CD4-positive, alpha-beta memory T cell (primary cell): ENCODE measurements at regions of chr14 and their contacts with region 1.

Region 1: DNA sequence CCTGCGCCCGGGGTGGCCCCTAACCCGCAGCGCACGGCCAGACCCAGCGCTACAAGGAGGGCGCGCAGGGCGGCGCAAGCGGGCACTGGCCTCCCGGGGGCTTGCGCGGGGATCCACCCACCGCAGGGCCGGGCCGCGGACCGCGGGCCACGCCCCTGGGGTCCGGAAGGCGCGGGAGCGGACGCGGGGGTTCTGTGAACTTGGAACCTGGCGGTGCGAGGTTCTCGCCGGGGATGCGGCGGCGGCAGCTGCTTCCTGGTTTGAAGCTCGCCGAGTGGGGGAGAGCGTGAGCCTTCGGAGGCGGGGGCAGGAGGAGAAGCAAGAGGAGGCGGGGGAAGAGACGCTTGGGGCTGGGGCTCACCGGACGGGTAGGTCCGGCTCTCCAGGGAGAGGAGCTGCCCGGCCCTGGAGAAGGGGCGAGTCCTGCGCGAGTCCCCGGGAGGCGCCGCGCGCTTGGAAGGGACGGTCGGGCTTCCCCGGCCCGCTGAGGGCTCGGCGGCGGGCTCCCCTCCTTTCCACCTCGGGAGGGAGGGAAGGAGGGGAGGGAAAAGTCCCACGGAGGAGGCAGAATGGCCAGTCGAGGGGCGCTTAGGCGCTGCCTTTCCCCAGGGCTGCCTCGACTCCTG is at the start of gene PRKCH:
- DNase-seq: peak; percentile 84 to 91 (median 85)
- H3K4me3 ChIP-seq: peak within 1 kb of the TSS; percentile 85 to 95
- H3K4me3 Mint-ChIP-seq: peak within 1 kb of the TSS; percentile 98 to 100 (median 99)
- H3K27ac ChIP-seq: peak within 1 kb of the TSS; percentile 89
- H3K27ac Mint-ChIP-seq: peak within 1 kb of the TSS in 6 of 7 donors; percentile 94 to 99 (median 97)
- H3K4me1 ChIP-seq: peaks cover 26% of the 10 kb centered on the region
- H3K4me1 Mint-ChIP-seq: peaks cover 17 to 40% (median 22%) of the 10 kb centered on the region in 4 donors
- H3K27me3 ChIP-seq: no peaks in the 10 kb centered on the region
- H3K27me3 Mint-ChIP-seq: no peaks in the 10 kb centered on the region
- total RNA-seq, gene PRKCH: 247 to 284 TPM

Region 2: GRCh38 chr14:61280526-61281185 is 40.8 kb before region 1 on chr14:
- CTCF ChIA-PET with region 1: interaction called, 7 read pairs
- POLR2A ChIA-PET with region 1: interaction called, 16 read pairs
- intact Hi-C with region 1: no loop called
- DNase-seq: peak; percentile 73 to 81 (median 78)
- H3K4me3 ChIP-seq: peak overlapping the region; percentile 45 to 76
- H3K4me3 Mint-ChIP-seq: peak overlapping the region; percentile 90 to 95 (median 93)
- H3K27ac ChIP-seq: peak overlapping the region; percentile 65
- H3K27ac Mint-ChIP-seq: peak overlapping the region; percentile 87 to 96 (median 94)
- H3K4me1 ChIP-seq: peaks cover 16% of the 10 kb centered on the region
- H3K4me1 Mint-ChIP-seq: peaks cover 19 to 38% (median 24%) of the 10 kb centered on the region in 4 donors
- H3K27me3 ChIP-seq: no peaks in the 10 kb centered on the region
- H3K27me3 Mint-ChIP-seq: no peaks in the 10 kb centered on the region

Region 3: GRCh38 chr14:61335671-61336275 is 14.3 kb after region 1 on chr14:
- CTCF ChIA-PET with region 1: interaction called, 84 read pairs
- POLR2A ChIA-PET with region 1: interaction called, 578 read pairs
- intact Hi-C with region 1: loop called (anchors 1 kb)
- DNase-seq: peak; percentile 65 to 78 (median 73)
- H3K4me3 ChIP-seq: peak overlapping the region; percentile 2 to 25
- H3K4me3 Mint-ChIP-seq: peak overlapping the region; percentile 78 to 87 (median 84)
- H3K27ac ChIP-seq: peak overlapping the region; percentile 84
- H3K27ac Mint-ChIP-seq: peak overlapping the region; percentile 93 to 100 (median 99)
- H3K4me1 ChIP-seq: peaks cover 94% of the 10 kb centered on the region
- H3K4me1 Mint-ChIP-seq: peaks cover 70 to 85% (median 78%) of the 10 kb centered on the region in 4 donors
- H3K27me3 ChIP-seq: no peaks in the 10 kb centered on the region
- H3K27me3 Mint-ChIP-seq: no peaks in the 10 kb centered on the region

Region 4: GRCh38 chr14:61347826-61348443 is 26.4 kb after region 1 on chr14:
- CTCF ChIA-PET with region 1: interaction called, 27 read pairs
- POLR2A ChIA-PET with region 1: interaction called, 578 read pairs
- intact Hi-C with region 1: no loop called
- DNase-seq: peak in 1 of 5 donors; percentile 73
- H3K4me3 ChIP-seq: peak overlapping the region; percentile 21 to 51
- H3K4me3 Mint-ChIP-seq: peak overlapping the region; percentile 76 to 88 (median 86)
- H3K27ac ChIP-seq: peak overlapping the region; percentile 78
- H3K27ac Mint-ChIP-seq: peak overlapping the region; percentile 93 to 98 (median 96)
- H3K4me1 ChIP-seq: peaks cover 100% of the 10 kb centered on the region
- H3K4me1 Mint-ChIP-seq: peaks cover 83 to 100% (median 90%) of the 10 kb centered on the region in 4 donors
- H3K27me3 ChIP-seq: no peaks in the 10 kb centered on the region
- H3K27me3 Mint-ChIP-seq: no peaks in the 10 kb centered on the region

Region 5: GRCh38 chr14:61388173-61388975 is 66.9 kb after region 1 on chr14:
- CTCF ChIA-PET with region 1: interaction called, 18 read pairs
- POLR2A ChIA-PET with region 1: interaction called, 84 read pairs
- intact Hi-C with region 1: loop called (anchors 1 kb)
- DNase-seq: peak; percentile 50 to 69 (median 61)
- H3K4me3 ChIP-seq: peak overlapping the region in 1 of 2 donors; percentile 26
- H3K4me3 Mint-ChIP-seq: peak overlapping the region in 2 of 8 donors; percentile 72 to 78
- H3K27ac ChIP-seq: peak overlapping the region; percentile 65
- H3K27ac Mint-ChIP-seq: no peak overlapping the region
- H3K4me1 ChIP-seq: peaks cover 100% of the 10 kb centered on the region
- H3K4me1 Mint-ChIP-seq: peaks cover 0 to 50% (median 20%) of the 10 kb centered on the region in 4 donors
- H3K27me3 ChIP-seq: no peaks in the 10 kb centered on the region
- H3K27me3 Mint-ChIP-seq: no peaks in the 10 kb centered on the region

Region 6: GRCh38 chr14:61403411-61403810 is 81.9 kb after region 1 on chr14:
- CTCF ChIA-PET with region 1: interaction called, 5 read pairs
- POLR2A ChIA-PET with region 1: interaction called, 30 read pairs
- intact Hi-C with region 1: loop called (anchors 5 kb)
- DNase-seq: peak; percentile 49 to 69 (median 59)
- H3K4me3 ChIP-seq: no peak overlapping the region
- H3K4me3 Mint-ChIP-seq: peak overlapping the region; percentile 59 to 88 (median 70)
- H3K27ac ChIP-seq: peak overlapping the region; percentile 52
- H3K27ac Mint-ChIP-seq: peak overlapping the region; percentile 65 to 97 (median 93)
- H3K4me1 ChIP-seq: peaks cover 96% of the 10 kb centered on the region
- H3K4me1 Mint-ChIP-seq: peaks cover 65 to 90% (median 78%) of the 10 kb centered on the region in 4 donors
- H3K27me3 ChIP-seq: no peaks in the 10 kb centered on the region
- H3K27me3 Mint-ChIP-seq: no peaks in the 10 kb centered on the region

Region 7: DNA sequence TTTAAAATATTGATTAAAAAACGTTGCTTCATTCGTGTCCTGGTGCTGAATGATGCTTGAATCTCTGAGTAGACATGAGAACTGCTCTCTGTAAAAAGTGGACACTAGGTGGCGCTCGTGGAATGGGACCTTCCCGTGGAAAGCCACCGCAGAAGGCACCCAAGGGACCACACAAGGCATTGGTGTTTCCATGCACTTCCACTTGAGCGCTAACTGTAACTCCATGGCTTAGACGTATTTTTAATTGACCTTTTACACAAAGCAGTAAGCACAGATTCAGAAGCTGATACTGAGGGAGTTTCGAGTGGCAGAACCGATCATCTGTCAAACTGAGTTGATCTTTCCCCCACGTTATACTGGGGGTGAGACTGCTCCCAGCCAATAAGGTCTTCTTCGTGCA is 135.2 kb after region 1 on chr14:
- CTCF ChIA-PET with region 1: interaction called, 14 read pairs
- POLR2A ChIA-PET with region 1: interaction called, 39 read pairs
- intact Hi-C with region 1: loop called (anchors 1 kb)
- DNase-seq: peak; percentile 74 to 83 (median 77)
- H3K4me3 ChIP-seq: no peak overlapping the region
- H3K4me3 Mint-ChIP-seq: peak overlapping the region in 2 of 8 donors; percentile 17 to 27
- H3K27ac ChIP-seq: peak overlapping the region; percentile 13
- H3K27ac Mint-ChIP-seq: peak overlapping the region; percentile 75 to 97 (median 92)
- H3K4me1 ChIP-seq: peaks cover 70% of the 10 kb centered on the region
- H3K4me1 Mint-ChIP-seq: peaks cover 63 to 91% (median 71%) of the 10 kb centered on the region in 4 donors
- H3K27me3 ChIP-seq: no peaks in the 10 kb centered on the region
- H3K27me3 Mint-ChIP-seq: no peaks in the 10 kb centered on the region

Region 8: GRCh38 chr14:61484826-61485585 is 163.5 kb after region 1 on chr14:
- CTCF ChIA-PET with region 1: no interaction called
- POLR2A ChIA-PET with region 1: no interaction called
- intact Hi-C with region 1: no loop called
- DNase-seq: no peak
- H3K4me3 ChIP-seq: no peak overlapping the region
- H3K4me3 Mint-ChIP-seq: peak overlapping the region in 1 of 8 donors; percentile 35
- H3K27ac ChIP-seq: no peak overlapping the region
- H3K27ac Mint-ChIP-seq: peak overlapping the region in 5 of 7 donors; percentile 4 to 74 (median 51)
- H3K4me1 ChIP-seq: peaks cover 34% of the 10 kb centered on the region
- H3K4me1 Mint-ChIP-seq: peaks cover 25 to 80% (median 51%) of the 10 kb centered on the region in 4 donors
- H3K27me3 ChIP-seq: no peaks in the 10 kb centered on the region
- H3K27me3 Mint-ChIP-seq: no peaks in the 10 kb centered on the region